ENCODE measurements at regions of chr6 and their contacts with region 1.

Region 1: GRCh38 chr6:30066577-30067459 is at the start of gene PPP1R11:
- DNase-seq: peak; percentile 99
- H3K4me3 Mint-ChIP-seq: peak within 1 kb of the TSS; percentile 90
- H3K27ac Mint-ChIP-seq: peak within 1 kb of the TSS; percentile 96
- H3K4me1 Mint-ChIP-seq: peaks cover 48% of the 10 kb centered on the region
- H3K27me3 Mint-ChIP-seq: peaks cover 7% of the 10 kb centered on the region
- total RNA-seq, gene PPP1R11: 42.8 to 46.6 TPM

Region 2: GRCh38 chr6:28537509-28538140 is 1529.2 kb before region 1 on chr6:
- CTCF ChIA-PET with region 1: no interaction called
- intact Hi-C with region 1: loop called (anchors 5 kb)
- DNase-seq: peak; percentile 73
- H3K4me3 Mint-ChIP-seq: peak overlapping the region; percentile 58
- H3K27ac Mint-ChIP-seq: peak overlapping the region; percentile 13
- H3K4me1 Mint-ChIP-seq: peaks cover 24% of the 10 kb centered on the region
- H3K27me3 Mint-ChIP-seq: peaks cover 22% of the 10 kb centered on the region

Region 3: DNA sequence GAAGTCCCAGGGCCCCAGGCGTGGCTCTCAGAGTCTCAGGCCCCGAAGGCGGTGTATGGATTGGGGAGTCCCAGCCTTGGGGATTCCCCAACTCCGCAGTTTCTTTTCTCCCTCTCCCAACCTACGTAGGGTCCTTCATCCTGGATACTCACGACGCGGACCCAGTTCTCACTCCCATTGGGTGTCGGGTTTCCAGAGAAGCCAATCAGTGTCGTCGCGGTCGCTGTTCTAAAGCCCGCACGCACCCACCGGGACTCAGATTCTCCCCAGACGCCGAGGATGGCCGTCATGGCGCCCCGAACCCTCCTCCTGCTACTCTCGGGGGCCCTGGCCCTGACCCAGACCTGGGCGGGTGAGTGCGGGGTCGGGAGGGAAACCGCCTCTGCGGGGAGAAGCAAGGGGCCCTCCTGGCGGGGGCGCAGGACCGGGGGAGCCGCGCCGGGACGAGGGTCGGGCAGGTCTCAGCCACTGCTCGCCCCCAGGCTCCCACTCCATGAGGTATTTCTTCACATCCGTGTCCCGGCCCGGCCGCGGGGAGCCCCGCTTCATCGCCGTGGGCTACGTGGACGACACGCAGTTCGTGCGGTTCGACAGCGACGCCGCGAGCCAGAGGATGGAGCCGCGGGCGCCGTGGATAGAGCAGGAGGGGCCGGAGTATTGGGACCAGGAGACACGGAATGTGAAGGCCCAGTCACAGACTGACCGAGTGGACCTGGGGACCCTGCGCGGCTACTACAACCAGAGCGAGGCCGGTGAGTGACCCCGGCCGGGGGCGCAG is 124.4 kb before region 1 on chr6 and contains the start of gene HLA-A:
- CTCF ChIA-PET with region 1: no interaction called
- intact Hi-C with region 1: loop called (anchors 2 kb)
- DNase-seq: peak; percentile 97
- H3K4me3 Mint-ChIP-seq: peak within 1 kb of the TSS; percentile 97
- H3K27ac Mint-ChIP-seq: peak within 1 kb of the TSS; percentile 99
- H3K4me1 Mint-ChIP-seq: peaks cover 53% of the 10 kb centered on the region
- H3K27me3 Mint-ChIP-seq: no peaks in the 10 kb centered on the region
- total RNA-seq, gene HLA-A: 1,509 to 1,515 TPM

Region 4: GRCh38 chr6:30102970-30103874 is 36.4 kb after region 1 on chr6:
- CTCF ChIA-PET with region 1: interaction called, 6 read pairs
- intact Hi-C with region 1: loop called (anchors 2 kb)
- DNase-seq: peak; percentile 93
- H3K4me3 Mint-ChIP-seq: peak overlapping the region; percentile 78
- H3K27ac Mint-ChIP-seq: no peak overlapping the region
- H3K4me1 Mint-ChIP-seq: peaks cover 45% of the 10 kb centered on the region
- H3K27me3 Mint-ChIP-seq: peaks cover 26% of the 10 kb centered on the region

Region 5: GRCh38 chr6:30212865-30213666 is 146.2 kb after region 1 on chr6 and contains the start of gene TRIM26:
- CTCF ChIA-PET with region 1: no interaction called
- intact Hi-C with region 1: loop called (anchors 1 kb)
- DNase-seq: peak; percentile 99
- H3K4me3 Mint-ChIP-seq: peak within 1 kb of the TSS; percentile 94
- H3K27ac Mint-ChIP-seq: peak within 1 kb of the TSS; percentile 99
- H3K4me1 Mint-ChIP-seq: peaks cover 41% of the 10 kb centered on the region
- H3K27me3 Mint-ChIP-seq: no peaks in the 10 kb centered on the region
- total RNA-seq, gene TRIM26: 36.8 to 38.7 TPM

Region 6: GRCh38 chr6:30515932-30516753 is 449.3 kb after region 1 on chr6:
- CTCF ChIA-PET with region 1: no interaction called
- intact Hi-C with region 1: loop called (anchors 10 kb)
- DNase-seq: peak; percentile 98
- H3K4me3 Mint-ChIP-seq: peak overlapping the region; percentile 87
- H3K27ac Mint-ChIP-seq: peak overlapping the region; percentile 99
- H3K4me1 Mint-ChIP-seq: peaks cover 70% of the 10 kb centered on the region
- H3K27me3 Mint-ChIP-seq: no peaks in the 10 kb centered on the region

Region 7: GRCh38 chr6:30707281-30707872 is 640.6 kb after region 1 on chr6:
- CTCF ChIA-PET with region 1: no interaction called
- intact Hi-C with region 1: no loop called
- DNase-seq: no peak
- H3K4me3 Mint-ChIP-seq: no peak overlapping the region
- H3K27ac Mint-ChIP-seq: no peak overlapping the region
- H3K4me1 Mint-ChIP-seq: peaks cover 7% of the 10 kb centered on the region
- H3K27me3 Mint-ChIP-seq: no peaks in the 10 kb centered on the region

Measured in activated naive CD4-positive, alpha-beta T cell treated with anti-CD3 and anti-CD28 coated beads for 36 hours (primary cell).